ENCODE measurements at regions of chr12 and their contacts with region 1.

Region 1: GRCh38 chr12:27865421-27865820 is 85.4 kb upstream of the MANSC4 start:
- DNase-seq: no peak
- ATAC-seq: no peak
- H3K4me3 ChIP-seq: no peak overlapping the region
- H3K27ac ChIP-seq: no peak overlapping the region
- H3K4me1 ChIP-seq: no peaks in the 10 kb centered on the region
- H3K27me3 ChIP-seq: no peaks in the 10 kb centered on the region
- CTCF ChIP-seq: no peak

Region 2: GRCh38 chr12:27610374-27610773 is 255.0 kb before region 1 on chr12:
- CTCF ChIA-PET with region 1: no interaction called
- POLR2A ChIA-PET with region 1: no interaction called
- intact Hi-C with region 1: no loop called
- DNase-seq: peak; percentile 88
- ATAC-seq: peak; percentile 81
- H3K4me3 ChIP-seq: no peak overlapping the region
- H3K27ac ChIP-seq: peak overlapping the region; percentile 49
- H3K4me1 ChIP-seq: peaks cover 36% of the 10 kb centered on the region
- H3K27me3 ChIP-seq: no peaks in the 10 kb centered on the region
- CTCF ChIP-seq: no peak

Region 3: DNA sequence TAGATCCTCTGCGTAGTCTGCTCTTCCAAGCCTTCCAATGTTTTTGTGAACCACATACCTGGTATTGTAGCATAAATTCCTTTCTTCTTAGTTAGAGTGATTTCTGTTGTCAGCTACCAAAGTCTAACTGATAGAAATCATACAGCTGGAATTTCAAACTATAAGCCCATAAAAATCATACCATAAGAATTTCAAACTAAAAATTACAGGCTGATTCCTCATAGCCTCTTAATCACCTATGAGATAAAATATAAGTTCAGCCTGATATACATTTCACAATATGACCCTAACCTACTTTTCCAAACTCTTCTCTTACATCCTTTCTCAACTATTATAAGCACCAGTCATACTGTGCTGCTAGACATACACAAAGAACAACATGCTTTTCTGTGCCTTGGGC is 42.3 kb after region 1 on chr12:
- CTCF ChIA-PET with region 1: no interaction called
- POLR2A ChIA-PET with region 1: no interaction called
- intact Hi-C with region 1: loop called (anchors 2 kb)
- DNase-seq: peak; percentile 88
- ATAC-seq: peak; percentile 54
- H3K4me3 ChIP-seq: no peak overlapping the region
- H3K27ac ChIP-seq: no peak overlapping the region
- H3K4me1 ChIP-seq: peaks cover 43% of the 10 kb centered on the region
- H3K27me3 ChIP-seq: no peaks in the 10 kb centered on the region
- CTCF ChIP-seq: no peak

Measured in PC-3 (cell line).